T-cell (primary cell): ENCODE measurements at regions of chr16 and their contacts with region 1.

Region 1: DNA sequence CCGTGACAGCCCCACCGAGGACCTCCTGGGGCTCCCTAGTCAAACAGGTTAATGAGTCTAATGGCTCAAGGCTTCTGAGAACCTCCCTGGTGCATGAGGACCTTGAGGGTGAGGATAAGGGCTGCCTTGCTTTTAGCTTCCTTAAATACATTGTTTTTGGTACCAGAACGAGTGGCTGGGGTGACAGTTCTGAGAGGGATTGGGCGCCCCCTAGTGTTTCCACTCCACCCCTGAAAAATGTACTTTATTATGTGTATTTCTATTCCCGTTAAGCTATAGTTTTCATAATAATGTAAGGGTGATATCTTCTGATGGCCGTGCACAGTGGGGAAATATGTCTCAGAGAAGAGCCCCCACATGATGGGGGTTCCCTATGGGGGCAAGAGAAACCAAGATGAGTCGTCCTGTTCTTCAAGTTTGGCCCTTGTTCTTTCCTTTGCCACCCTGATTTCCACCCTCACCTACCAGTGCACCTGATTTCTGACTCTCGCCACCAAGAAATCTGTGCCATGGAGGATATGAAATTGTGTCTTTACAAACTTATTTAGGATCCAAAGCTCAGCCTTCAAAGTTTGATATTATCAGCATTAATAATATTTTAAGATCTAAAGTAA is 14.5 kb upstream of the VWA3A start:
- DNase-seq: peak; percentile 35 to 82 (median 65)
- ATAC-seq: peak; percentile 40 to 74 (median 60)
- H3K4me3 ChIP-seq: no peak overlapping the region
- H3K4me3 Mint-ChIP-seq: no peak overlapping the region
- H3K27ac ChIP-seq: no peak overlapping the region
- H3K27ac Mint-ChIP-seq: no peak overlapping the region
- H3K4me1 ChIP-seq: peaks cover 0 to 2% of the 10 kb centered on the region in 2 experiments
- H3K4me1 Mint-ChIP-seq: peaks cover 0 to 4% (median 3%) of the 10 kb centered on the region in 3 donors
- H3K27me3 ChIP-seq: no peaks in the 10 kb centered on the region
- H3K27me3 Mint-ChIP-seq: no peaks in the 10 kb centered on the region

Region 2: DNA sequence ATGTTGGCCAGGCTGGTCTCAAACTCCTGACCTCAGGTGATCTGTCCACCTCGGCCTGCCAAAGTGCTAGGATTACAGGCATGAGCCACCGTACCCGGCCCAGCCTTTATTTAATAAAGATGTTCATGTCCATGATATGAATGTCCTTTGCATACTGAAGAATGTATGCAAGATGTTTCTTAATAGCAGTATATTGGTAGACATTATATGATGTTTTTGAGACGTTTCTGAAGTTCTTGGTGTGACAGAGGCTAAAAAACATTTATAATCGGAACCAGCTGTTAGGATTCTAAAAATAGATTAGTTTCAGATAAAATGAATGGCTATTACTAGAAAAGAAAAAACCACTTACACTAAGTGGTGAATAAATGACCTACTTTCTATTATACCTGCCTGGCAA is 88.7 kb before region 1 on chr16:
- CTCF ChIA-PET with region 1: interaction called in 1 of 2 experiments, 11 read pairs
- POLR2A ChIA-PET with region 1: no interaction called
- DNase-seq: no peak
- ATAC-seq: no peak
- H3K4me3 ChIP-seq: no peak overlapping the region
- H3K4me3 Mint-ChIP-seq: no peak overlapping the region
- H3K27ac ChIP-seq: no peak overlapping the region
- H3K27ac Mint-ChIP-seq: no peak overlapping the region
- H3K4me1 ChIP-seq: peaks cover 2 to 4% of the 10 kb centered on the region in 2 experiments
- H3K4me1 Mint-ChIP-seq: peaks cover 9 to 28% (median 12%) of the 10 kb centered on the region in 3 donors
- H3K27me3 ChIP-seq: no peaks in the 10 kb centered on the region
- H3K27me3 Mint-ChIP-seq: no peaks in the 10 kb centered on the region

Region 3: DNA sequence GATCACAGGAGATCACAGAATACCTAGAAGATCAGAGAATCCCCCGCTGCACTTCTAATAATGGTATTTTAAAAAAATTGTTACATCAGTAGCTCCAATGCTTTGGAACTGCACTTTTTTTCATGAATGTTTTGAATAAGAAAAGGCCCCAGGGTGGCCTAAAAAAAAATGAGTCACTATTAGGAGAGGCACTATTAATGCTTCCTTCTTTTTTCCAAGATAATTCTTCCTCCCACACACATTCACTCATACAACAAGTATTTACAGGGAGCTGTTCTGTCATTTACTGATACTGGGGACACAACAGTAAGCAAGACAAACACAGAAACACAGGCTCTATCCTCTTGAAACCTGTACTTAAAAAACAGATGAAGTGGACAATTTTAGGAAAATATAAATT is 76.2 kb before region 1 on chr16:
- CTCF ChIA-PET with region 1: interaction called, 29 to 73 read pairs
- POLR2A ChIA-PET with region 1: interaction called in 1 of 2 experiments, 3 read pairs
- DNase-seq: peak in 1 of 35 experiments; percentile 8
- ATAC-seq: no peak
- H3K4me3 ChIP-seq: no peak overlapping the region
- H3K4me3 Mint-ChIP-seq: peak overlapping the region in 1 of 3 donors; percentile 53
- H3K27ac ChIP-seq: no peak overlapping the region
- H3K27ac Mint-ChIP-seq: no peak overlapping the region
- H3K4me1 ChIP-seq: peaks cover 0 to 7% of the 10 kb centered on the region in 2 experiments
- H3K4me1 Mint-ChIP-seq: peaks cover 10 to 14% (median 11%) of the 10 kb centered on the region in 3 donors
- H3K27me3 ChIP-seq: peaks cover 0 to 9% of the 10 kb centered on the region in 2 experiments
- H3K27me3 Mint-ChIP-seq: peaks cover 0 to 2% of the 10 kb centered on the region in 2 donors

Region 4: GRCh38 chr16:22007509-22008214 is 70.1 kb before region 1 on chr16 and contains the start of gene MOSMO:
- CTCF ChIA-PET with region 1: interaction called, 29 to 73 read pairs
- POLR2A ChIA-PET with region 1: no interaction called
- DNase-seq: peak; percentile 20 to 78 (median 58)
- ATAC-seq: peak; percentile 93 to 97 (median 94)
- H3K4me3 ChIP-seq: peak within 1 kb of the TSS; percentile 83 to 89
- H3K4me3 Mint-ChIP-seq: peak within 1 kb of the TSS; percentile 83 to 97 (median 88)
- H3K27ac ChIP-seq: peak within 1 kb of the TSS; percentile 57
- H3K27ac Mint-ChIP-seq: peak within 1 kb of the TSS; percentile 88
- H3K4me1 ChIP-seq: peaks cover 14 to 20% of the 10 kb centered on the region in 2 experiments
- H3K4me1 Mint-ChIP-seq: peaks cover 44 to 50% (median 49%) of the 10 kb centered on the region in 3 donors
- H3K27me3 ChIP-seq: no peaks in the 10 kb centered on the region
- H3K27me3 Mint-ChIP-seq: no peaks in the 10 kb centered on the region
- total RNA-seq, gene MOSMO: 9.8 to 18.6 (median 17.3) TPM

Region 5: GRCh38 chr16:22063888-22064467 is 13.8 kb before region 1 on chr16:
- CTCF ChIA-PET with region 1: interaction called, 4 to 12 read pairs
- POLR2A ChIA-PET with region 1: no interaction called
- DNase-seq: no peak
- ATAC-seq: no peak
- H3K4me3 ChIP-seq: no peak overlapping the region
- H3K4me3 Mint-ChIP-seq: no peak overlapping the region
- H3K27ac ChIP-seq: no peak overlapping the region
- H3K27ac Mint-ChIP-seq: no peak overlapping the region
- H3K4me1 ChIP-seq: no peaks in the 10 kb centered on the region
- H3K4me1 Mint-ChIP-seq: peaks cover 9 to 12% (median 10%) of the 10 kb centered on the region in 3 donors
- H3K27me3 ChIP-seq: no peaks in the 10 kb centered on the region
- H3K27me3 Mint-ChIP-seq: no peaks in the 10 kb centered on the region

Region 6: DNA sequence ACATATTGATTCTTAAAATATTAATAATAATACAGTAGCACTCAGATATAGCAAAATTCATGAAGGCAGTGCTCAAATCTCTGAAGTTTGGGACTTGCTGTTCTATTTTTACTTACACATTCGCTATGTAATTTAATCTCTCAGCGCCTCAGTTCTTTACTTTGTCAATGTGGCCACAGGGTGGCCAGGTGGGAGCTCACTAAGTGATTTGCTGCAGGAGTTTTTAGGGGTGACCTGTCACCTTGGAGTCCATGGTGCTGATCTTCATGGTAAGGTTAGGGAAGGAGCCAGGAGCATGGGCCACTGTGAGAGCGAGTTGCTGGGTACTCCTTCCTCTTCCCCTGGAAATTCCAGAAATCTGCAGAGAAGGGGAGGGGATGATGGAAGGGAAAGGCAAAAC is 42.6 kb after region 1 on chr16:
- CTCF ChIA-PET with region 1: no interaction called
- POLR2A ChIA-PET with region 1: no interaction called
- DNase-seq: no peak
- ATAC-seq: no peak
- H3K4me3 ChIP-seq: no peak overlapping the region
- H3K4me3 Mint-ChIP-seq: no peak overlapping the region
- H3K27ac ChIP-seq: no peak overlapping the region
- H3K27ac Mint-ChIP-seq: no peak overlapping the region
- H3K4me1 ChIP-seq: no peaks in the 10 kb centered on the region
- H3K4me1 Mint-ChIP-seq: no peaks in the 10 kb centered on the region
- H3K27me3 ChIP-seq: no peaks in the 10 kb centered on the region
- H3K27me3 Mint-ChIP-seq: peaks cover 0 to 4% of the 10 kb centered on the region in 2 donors

Region 7: DNA sequence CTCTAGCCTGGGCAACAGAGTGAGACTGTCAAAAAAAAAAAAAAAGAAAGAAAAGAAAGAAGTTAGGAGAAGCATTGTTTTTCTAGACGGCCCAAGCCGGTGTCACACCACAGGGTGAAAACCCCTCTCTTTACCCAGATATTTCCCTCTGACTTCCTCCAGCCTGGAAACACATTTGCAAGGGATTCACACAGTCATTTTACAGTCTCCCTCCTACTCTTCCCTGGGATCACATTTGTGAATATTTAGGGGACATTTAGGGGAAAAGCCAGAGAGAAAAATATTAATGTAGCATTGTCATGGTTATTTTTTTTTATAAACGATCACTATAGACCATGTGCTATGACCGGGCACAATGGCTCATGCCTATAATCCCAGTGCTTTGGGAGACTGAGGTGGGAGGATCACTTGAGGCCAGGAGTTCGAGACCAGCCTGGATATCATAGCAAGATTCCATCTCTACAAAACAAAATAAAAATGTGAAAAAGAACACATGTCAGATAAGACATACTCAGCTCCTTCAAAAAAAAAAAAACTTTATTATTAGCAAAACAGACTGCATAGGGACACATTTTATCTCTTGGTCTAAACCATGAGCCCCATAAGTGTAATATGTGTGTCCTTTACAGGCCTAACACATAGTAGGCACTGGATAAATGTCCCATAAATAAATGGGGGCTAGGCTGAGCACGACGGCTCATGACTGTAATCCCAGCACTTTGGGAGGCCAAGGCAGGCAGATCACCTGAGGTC is 73.6 kb after region 1 on chr16:
- CTCF ChIA-PET with region 1: no interaction called
- POLR2A ChIA-PET with region 1: no interaction called
- DNase-seq: no peak
- ATAC-seq: no peak
- H3K4me3 ChIP-seq: no peak overlapping the region
- H3K4me3 Mint-ChIP-seq: no peak overlapping the region
- H3K27ac ChIP-seq: no peak overlapping the region
- H3K27ac Mint-ChIP-seq: no peak overlapping the region
- H3K4me1 ChIP-seq: no peaks in the 10 kb centered on the region
- H3K4me1 Mint-ChIP-seq: no peaks in the 10 kb centered on the region
- H3K27me3 ChIP-seq: peaks cover 0 to 12% of the 10 kb centered on the region in 2 experiments
- H3K27me3 Mint-ChIP-seq: peaks cover 0 to 5% of the 10 kb centered on the region in 2 donors

Region 8: GRCh38 chr16:22190776-22191531 is 113.1 kb after region 1 on chr16:
- CTCF ChIA-PET with region 1: interaction called in 1 of 2 experiments, 33 read pairs
- POLR2A ChIA-PET with region 1: interaction called in 1 of 2 experiments, 3 read pairs
- DNase-seq: peak; percentile 95 to 100 (median 99)
- ATAC-seq: peak; percentile 59 to 67 (median 65)
- H3K4me3 ChIP-seq: peak overlapping the region; percentile 52 to 79
- H3K4me3 Mint-ChIP-seq: peak overlapping the region; percentile 83 to 91 (median 84)
- H3K27ac ChIP-seq: peak overlapping the region; percentile 99
- H3K27ac Mint-ChIP-seq: peak overlapping the region; percentile 99 to 100
- H3K4me1 ChIP-seq: peaks cover 32 to 76% of the 10 kb centered on the region in 2 experiments
- H3K4me1 Mint-ChIP-seq: peaks cover 59 to 67% (median 64%) of the 10 kb centered on the region in 3 donors
- H3K27me3 ChIP-seq: no peaks in the 10 kb centered on the region
- H3K27me3 Mint-ChIP-seq: peaks cover 0 to 5% of the 10 kb centered on the region in 2 donors